ENCODE measurements at regions of chr2 and their contacts with region 1.

Region 1: GRCh38 chr2:23199115-23199918 is 185.7 kb upstream of the KLHL29 start:
- DNase-seq: peak in 1 of 2 experiments; percentile 40
- H3K4me3 ChIP-seq: no peak overlapping the region
- H3K4me3 Mint-ChIP-seq: no peak overlapping the region
- H3K27ac Mint-ChIP-seq: no peak overlapping the region
- H3K4me1 ChIP-seq: no peaks in the 10 kb centered on the region
- H3K4me1 Mint-ChIP-seq: no peaks in the 10 kb centered on the region
- H3K27me3 ChIP-seq: no peaks in the 10 kb centered on the region
- H3K27me3 Mint-ChIP-seq: peaks cover 14% of the 10 kb centered on the region
- CTCF ChIP-seq: peak; percentile 72 to 77

Region 2: DNA sequence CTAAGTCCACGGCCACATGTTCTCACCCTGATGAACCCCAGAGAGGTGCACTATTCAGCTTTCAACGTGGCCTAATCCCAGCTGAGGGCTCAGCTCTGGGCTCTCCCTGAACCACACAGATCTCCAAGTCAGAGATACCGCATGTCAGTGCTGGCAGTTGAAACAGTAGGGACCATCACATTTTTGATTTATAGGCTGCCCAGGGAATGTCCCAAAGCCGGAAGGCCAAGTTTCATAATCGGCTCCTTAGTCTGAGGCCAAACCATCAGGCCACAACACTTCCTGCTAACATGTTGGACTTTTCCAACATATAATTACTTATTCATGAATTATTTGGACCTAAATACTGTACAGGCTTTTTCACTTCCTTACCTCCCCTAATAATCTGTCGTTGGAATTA is 93.7 kb after region 1 on chr2:
- CTCF ChIA-PET with region 1: interaction called, 4 read pairs
- POLR2A ChIA-PET with region 1: no interaction called
- intact Hi-C with region 1: loop called (anchors 5 kb)
- DNase-seq: no peak
- H3K4me3 ChIP-seq: no peak overlapping the region
- H3K4me3 Mint-ChIP-seq: no peak overlapping the region
- H3K27ac Mint-ChIP-seq: no peak overlapping the region
- H3K4me1 ChIP-seq: no peaks in the 10 kb centered on the region
- H3K4me1 Mint-ChIP-seq: no peaks in the 10 kb centered on the region
- H3K27me3 ChIP-seq: no peaks in the 10 kb centered on the region
- H3K27me3 Mint-ChIP-seq: peaks cover 4% of the 10 kb centered on the region
- CTCF ChIP-seq: no peak